HCT116 (cell line): ENCODE measurements at regions of chr1 and their contacts with region 1.

Region 1: GRCh38 chr1:209585672-209586071 is 2.2 kb downstream of the CAMK1G start:
- DNase-seq: no peak
- ATAC-seq: no peak
- H3K4me3 ChIP-seq: no peak overlapping the region
- H3K27ac ChIP-seq: no peak overlapping the region
- H3K4me1 ChIP-seq: peaks cover 6 to 12% of the 10 kb centered on the region in 2 experiments; a peak in 3 of 4 replicates
- H3K27me3 ChIP-seq: no peaks in the 10 kb centered on the region; the same call in 1 of the 2 replicates
- CTCF ChIP-seq: no peak
- POLR2A ChIP-seq: no peak
- RAD21 ChIP-seq: no peak

Region 2: DNA sequence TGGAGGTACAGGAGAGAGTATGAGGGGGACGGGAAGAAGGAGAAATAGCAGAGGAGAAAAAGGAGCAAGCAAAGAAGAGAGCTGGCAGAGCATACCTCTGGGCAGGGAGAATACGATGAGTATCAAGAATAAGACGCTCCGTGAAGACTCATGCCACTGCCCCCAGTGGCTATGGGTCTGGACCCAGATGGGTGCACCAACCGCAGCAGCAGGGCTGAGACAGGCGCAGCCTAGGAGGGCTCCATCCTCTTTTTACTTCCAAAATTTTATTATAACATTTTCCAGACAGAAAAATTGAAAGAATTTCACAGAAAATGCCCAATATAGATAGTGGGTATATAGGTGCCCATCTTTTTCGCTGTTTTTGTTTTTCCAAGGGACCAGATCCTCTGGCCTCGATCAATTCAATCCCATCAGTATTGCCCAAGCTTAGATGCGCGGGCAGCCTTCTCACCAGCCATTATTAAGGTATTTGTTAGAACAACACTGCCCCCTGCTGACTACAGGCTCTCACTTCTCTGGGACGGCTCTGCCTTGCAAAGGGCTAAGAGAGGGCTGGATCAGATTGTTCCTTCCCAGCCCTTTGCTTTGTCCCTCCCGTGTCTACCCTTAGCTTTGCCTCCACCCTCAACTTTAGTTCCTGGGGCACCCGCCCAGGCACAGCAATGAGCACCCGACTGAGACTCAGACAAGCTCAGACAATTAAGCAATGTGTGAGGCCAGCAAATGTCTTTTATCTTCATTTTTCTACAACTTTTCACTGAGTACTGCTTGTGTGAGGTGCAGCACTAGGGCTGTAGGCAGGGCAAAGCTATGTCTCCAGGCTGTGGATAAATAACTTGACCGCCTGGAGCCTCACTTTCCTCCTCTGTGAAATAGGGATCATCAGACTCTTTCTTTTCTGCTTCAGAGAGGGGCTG is 19.7 kb before region 1 on chr1:
- CTCF ChIA-PET with region 1: interaction called, 10 read pairs
- POLR2A ChIA-PET with region 1: no interaction called
- RAD21 ChIA-PET with region 1: no interaction called
- intact Hi-C with region 1: no loop called
- DNase-seq: peak; percentile 78
- ATAC-seq: peak; percentile 96
- H3K4me3 ChIP-seq: no peak overlapping the region
- H3K27ac ChIP-seq: no peak overlapping the region
- H3K4me1 ChIP-seq: peaks cover 0 to 6% of the 10 kb centered on the region in 2 experiments; a peak in 1 of 4 replicates
- H3K27me3 ChIP-seq: peaks cover 10% of the 10 kb centered on the region; the same call in 1 of the 2 replicates
- CTCF ChIP-seq: peak; percentile 74 to 84 (median 83); a peak in 5 of 6 replicates
- POLR2A ChIP-seq: no peak
- RAD21 ChIP-seq: peak; percentile 83

Region 3: GRCh38 chr1:210159206-210159605 is 573.5 kb after region 1 on chr1:
- CTCF ChIA-PET with region 1: no interaction called
- POLR2A ChIA-PET with region 1: no interaction called
- RAD21 ChIA-PET with region 1: no interaction called
- intact Hi-C with region 1: no loop called
- DNase-seq: no peak
- ATAC-seq: no peak
- H3K4me3 ChIP-seq: no peak overlapping the region
- H3K27ac ChIP-seq: no peak overlapping the region
- H3K4me1 ChIP-seq: no peaks in the 10 kb centered on the region
- H3K27me3 ChIP-seq: no peaks in the 10 kb centered on the region
- CTCF ChIP-seq: no peak
- POLR2A ChIP-seq: no peak
- RAD21 ChIP-seq: no peak